Tibial artery (tissue), 4 donors: ENCODE measurements at regions of chr14 and their contacts with region 1.

Region 1: GRCh38 chr14:74945823-74946682 is 9.3 kb downstream of the PGF start:
- DNase-seq: peak; percentile 75 to 87
- H3K4me3 ChIP-seq: peak overlapping the region in 1 of 2 donors; percentile 12
- H3K27ac ChIP-seq: peak overlapping the region; percentile 67 to 79
- H3K4me1 ChIP-seq: peaks cover 0 to 57% (median 45%) of the 10 kb centered on the region in 4 donors
- H3K27me3 ChIP-seq: no peaks in the 10 kb centered on the region
- CTCF ChIP-seq: peak; percentile 91 to 93

Region 2: DNA sequence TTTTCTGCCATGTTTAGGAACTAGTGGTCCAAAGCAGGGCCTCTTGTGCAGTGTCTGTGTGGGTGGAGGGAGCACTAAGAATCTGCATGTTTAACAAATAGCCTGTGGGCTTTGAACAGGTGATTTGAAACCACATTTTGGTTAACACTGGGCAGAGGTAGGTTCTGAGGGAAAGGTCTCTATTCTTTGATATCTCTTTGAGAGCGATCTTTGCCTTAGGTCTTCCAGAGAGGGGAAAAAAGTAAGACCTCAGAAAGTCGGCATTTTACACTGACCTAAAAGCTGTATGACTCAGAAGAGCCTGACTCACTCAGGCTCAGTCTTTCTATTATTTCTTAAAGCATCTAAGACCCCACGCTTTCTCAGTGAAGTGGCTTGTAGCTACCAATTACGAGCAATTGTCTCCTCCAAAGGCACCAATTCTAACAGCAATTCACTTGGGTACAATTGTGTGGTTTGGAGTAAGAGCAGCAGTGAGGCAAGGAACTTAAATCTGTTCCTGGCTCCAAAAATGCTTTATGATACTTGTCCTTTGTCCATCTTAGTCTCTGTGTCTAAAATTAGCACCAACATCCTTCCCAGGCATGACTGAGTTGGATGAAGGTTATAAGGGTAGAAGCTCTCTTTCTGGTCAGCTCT is 65.4 kb after region 1 on chr14:
- intact Hi-C with region 1: loop called (anchors 5 kb)
- DNase-seq: no peak
- H3K4me3 ChIP-seq: no peak overlapping the region
- H3K27ac ChIP-seq: peak overlapping the region; percentile 68 to 69
- H3K4me1 ChIP-seq: peaks cover 7 to 39% (median 21%) of the 10 kb centered on the region in 4 donors
- H3K27me3 ChIP-seq: no peaks in the 10 kb centered on the region
- CTCF ChIP-seq: no peak

Region 3: DNA sequence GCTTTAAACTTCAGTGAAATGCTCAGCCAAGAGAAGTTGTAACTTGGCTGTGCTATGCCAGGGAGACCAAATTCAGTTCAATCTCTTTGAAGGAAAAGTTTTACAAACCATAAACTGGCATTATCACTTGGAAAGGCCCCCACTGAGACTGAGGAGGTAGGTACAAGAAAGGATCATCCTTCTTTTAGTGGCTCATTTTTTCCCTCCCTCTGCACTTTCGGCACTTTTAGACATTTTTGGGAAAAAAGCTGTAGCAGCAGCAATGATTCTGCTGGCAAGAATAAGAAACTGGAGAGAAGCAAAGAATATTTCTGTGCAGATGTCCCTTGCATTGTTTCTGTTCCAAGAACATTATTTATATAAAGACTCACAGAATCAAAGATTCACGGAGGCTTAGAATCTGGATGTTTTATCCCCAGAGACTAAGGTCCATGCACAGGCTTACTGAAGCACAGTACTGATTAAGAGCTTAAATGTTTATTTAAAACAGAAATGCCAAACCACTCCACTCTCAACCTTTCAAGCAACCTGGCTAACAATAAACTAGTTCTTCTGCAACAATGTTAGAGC is 135.7 kb after region 1 on chr14:
- intact Hi-C with region 1: loop called (anchors 2 kb)
- DNase-seq: no peak
- H3K4me3 ChIP-seq: no peak overlapping the region
- H3K27ac ChIP-seq: peak overlapping the region in 1 of 2 donors; percentile 6
- H3K4me1 ChIP-seq: no peaks in the 10 kb centered on the region
- H3K27me3 ChIP-seq: no peaks in the 10 kb centered on the region
- CTCF ChIP-seq: no peak